ENCODE measurements at regions of chr2 and their contacts with region 1.

Region 1: DNA sequence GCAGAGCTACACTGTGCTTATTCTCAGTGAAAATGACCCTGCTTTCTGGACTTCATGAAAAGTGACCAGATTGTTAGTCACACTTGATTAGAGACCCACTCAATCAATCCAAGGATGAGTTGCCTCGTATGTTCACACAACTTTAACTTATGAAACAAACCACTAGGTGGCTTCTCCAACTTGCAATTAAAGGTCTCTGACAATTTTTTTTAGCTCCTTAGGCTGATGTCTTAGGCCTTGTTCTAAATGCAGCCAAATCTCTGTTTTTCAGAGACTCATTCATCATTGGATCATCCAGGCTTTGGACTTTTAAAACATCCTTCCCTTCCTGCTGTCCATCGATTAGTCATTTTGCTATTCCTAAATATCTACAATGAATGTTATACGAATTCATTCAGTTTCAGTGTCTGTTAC is 63.4 kb downstream of the MREG start:
- DNase-seq: no peak
- H3K4me3 ChIP-seq: no peak overlapping the region
- H3K27me3 ChIP-seq: no peaks in the 10 kb centered on the region
- CTCF ChIP-seq: peak; percentile 62

Region 2: DNA sequence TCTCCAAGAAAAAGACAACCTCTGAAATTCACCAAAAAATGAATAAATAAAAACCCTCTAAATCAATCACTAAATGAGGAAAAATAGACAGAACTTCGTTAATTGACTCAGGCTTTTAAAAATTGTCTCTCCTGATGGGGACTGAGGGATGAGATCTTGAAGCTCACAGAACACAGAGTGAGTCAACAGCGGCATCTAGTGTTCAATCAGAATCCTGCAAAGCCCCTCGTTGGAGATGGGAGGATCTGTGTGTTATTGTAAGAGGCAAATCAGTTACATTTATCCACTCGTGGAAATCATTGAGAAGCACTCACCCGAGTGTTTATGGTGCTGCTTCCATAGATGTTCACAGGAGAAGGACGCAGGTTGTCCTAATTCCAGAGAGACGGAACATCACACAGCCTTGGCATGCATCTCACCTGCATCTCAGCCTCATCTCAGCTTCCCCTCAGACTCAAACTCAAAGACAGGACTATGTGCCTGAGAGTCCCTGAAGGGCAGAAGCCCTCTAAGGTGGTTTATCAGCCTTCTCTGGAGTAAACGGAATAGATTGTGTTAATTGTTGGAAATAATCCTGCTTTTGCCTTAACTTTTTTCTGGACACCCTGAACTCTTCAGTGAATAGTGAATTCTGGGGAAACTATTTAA is 18.6 kb before region 1 on chr2:
- CTCF ChIA-PET with region 1: interaction called, 13 read pairs
- POLR2A ChIA-PET with region 1: no interaction called
- DNase-seq: no peak
- H3K4me3 ChIP-seq: no peak overlapping the region
- H3K27me3 ChIP-seq: peaks cover 2% of the 10 kb centered on the region; the same call in 1 of the 2 replicates
- CTCF ChIP-seq: peak; percentile 92

Region 3: GRCh38 chr2:215973954-215974702 is 24.1 kb after region 1 on chr2:
- CTCF ChIA-PET with region 1: no interaction called
- POLR2A ChIA-PET with region 1: no interaction called
- DNase-seq: no peak
- H3K4me3 ChIP-seq: no peak overlapping the region
- H3K27me3 ChIP-seq: no peaks in the 10 kb centered on the region
- CTCF ChIP-seq: no peak

Region 4: DNA sequence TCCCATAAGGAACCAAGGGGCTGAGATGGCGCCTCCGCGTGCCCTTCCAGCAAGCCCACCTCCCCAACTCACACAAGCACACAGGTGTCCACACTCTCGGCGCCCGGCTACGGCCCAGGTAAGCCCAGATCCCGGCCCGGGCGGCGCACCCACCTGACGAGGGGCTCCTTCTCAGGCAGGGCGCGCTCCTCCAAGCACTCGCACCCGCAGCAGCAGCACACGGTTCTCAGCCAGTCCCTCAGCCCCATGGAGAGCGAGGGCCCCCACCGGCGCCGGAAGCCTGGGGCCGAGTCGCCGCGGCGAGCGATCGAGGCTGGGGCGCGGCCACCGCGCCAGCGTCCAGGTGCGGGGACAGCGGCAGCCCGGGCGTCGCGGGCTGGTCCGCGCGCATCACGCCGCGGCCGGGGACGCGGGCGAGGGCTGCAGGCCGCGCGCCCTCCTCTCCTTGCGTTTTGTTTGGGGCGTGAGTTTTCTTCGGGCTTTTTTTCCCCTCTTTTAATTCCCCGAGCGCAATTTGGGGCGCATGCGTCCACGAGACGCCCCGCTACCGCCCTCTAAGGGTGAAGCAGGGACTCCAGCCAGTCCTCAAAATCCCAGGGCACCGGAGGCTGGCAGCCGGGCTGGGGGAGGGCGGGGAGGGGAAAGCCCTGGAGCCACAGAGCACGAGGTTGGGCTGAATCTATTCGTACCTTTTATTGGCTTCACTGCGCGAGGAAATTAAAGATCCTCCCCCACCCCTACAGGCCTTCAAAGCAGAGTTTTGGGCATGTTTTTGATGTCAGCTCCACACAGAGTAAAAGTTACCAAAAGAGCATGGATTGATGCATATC is 63.3 kb after region 1 on chr2 and contains the start of gene MREG:
- CTCF ChIA-PET with region 1: interaction called, 10 read pairs
- POLR2A ChIA-PET with region 1: no interaction called
- DNase-seq: no peak
- H3K4me3 ChIP-seq: peak within 1 kb of the TSS; percentile 73
- H3K27me3 ChIP-seq: no peaks in the 10 kb centered on the region
- CTCF ChIP-seq: peak; percentile 93
- polyA plus RNA-seq, gene MREG: 1.1 and 1.7 TPM in 2 replicates

Region 5: GRCh38 chr2:216023055-216023648 is 73.2 kb after region 1 on chr2:
- CTCF ChIA-PET with region 1: interaction called, 35 read pairs
- POLR2A ChIA-PET with region 1: no interaction called
- DNase-seq: no peak
- H3K4me3 ChIP-seq: no peak overlapping the region
- H3K27me3 ChIP-seq: no peaks in the 10 kb centered on the region
- CTCF ChIP-seq: peak; percentile 77